Heart right ventricle (tissue), 16 donors: ENCODE measurements at regions of chr19 and their contacts with region 1.

Region 1: DNA sequence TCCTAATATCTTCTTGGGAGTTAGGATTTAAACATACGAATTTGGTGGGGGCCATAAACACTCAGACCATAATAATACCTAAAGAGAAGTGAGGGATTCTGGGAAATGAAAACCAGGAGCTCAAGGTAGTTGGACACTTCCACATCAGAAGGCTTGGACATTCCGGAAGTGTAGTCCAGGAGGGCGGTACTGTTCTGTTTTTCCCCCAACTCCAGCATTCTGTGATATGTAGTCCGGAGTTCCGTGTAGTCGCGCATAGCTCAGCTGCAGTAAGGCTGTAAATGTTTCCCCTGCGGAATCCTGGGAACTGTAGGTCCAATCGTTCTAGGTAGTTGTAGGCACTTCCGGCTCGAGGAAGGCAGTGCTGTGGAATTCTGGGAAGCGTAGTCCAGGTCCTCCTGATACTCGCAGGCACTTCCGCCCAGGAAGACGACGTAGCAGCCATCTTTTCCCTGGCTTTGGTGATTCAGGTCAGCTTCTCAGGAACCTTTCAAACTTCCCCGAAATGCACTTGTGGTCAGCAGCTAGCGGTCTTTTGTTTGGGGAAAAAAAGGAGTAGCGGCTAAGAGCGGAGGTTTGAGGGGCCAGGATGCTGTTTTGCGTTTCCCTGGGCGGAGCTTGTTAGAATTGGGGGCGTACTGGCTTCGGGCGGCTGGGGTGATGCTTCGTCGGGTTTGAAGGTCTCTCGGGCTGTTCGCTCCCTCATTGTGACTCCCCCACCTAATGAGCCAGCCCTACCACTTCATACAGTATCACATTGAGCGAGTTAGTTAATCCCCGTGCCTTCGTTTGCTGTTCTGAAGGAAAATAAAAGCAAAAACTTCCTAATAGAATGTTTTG is at the start of gene ZNF226:
- DNase-seq: peak; percentile 76 to 95
- ATAC-seq: peak; percentile 99 to 100 (median 100)
- H3K4me3 ChIP-seq: peak within 1 kb of the TSS; percentile 55 to 86 (median 71)
- H3K27ac ChIP-seq: peak within 1 kb of the TSS; percentile 31 to 92 (median 86)
- H3K4me1 ChIP-seq: peaks cover 0 to 17% (median 12%) of the 10 kb centered on the region in 9 donors
- H3K27me3 ChIP-seq: no peaks in the 10 kb centered on the region
- CTCF ChIP-seq: no peak
- total RNA-seq, gene ZNF226: 17.0 to 30.6 (median 22.6) TPM

Region 2: DNA sequence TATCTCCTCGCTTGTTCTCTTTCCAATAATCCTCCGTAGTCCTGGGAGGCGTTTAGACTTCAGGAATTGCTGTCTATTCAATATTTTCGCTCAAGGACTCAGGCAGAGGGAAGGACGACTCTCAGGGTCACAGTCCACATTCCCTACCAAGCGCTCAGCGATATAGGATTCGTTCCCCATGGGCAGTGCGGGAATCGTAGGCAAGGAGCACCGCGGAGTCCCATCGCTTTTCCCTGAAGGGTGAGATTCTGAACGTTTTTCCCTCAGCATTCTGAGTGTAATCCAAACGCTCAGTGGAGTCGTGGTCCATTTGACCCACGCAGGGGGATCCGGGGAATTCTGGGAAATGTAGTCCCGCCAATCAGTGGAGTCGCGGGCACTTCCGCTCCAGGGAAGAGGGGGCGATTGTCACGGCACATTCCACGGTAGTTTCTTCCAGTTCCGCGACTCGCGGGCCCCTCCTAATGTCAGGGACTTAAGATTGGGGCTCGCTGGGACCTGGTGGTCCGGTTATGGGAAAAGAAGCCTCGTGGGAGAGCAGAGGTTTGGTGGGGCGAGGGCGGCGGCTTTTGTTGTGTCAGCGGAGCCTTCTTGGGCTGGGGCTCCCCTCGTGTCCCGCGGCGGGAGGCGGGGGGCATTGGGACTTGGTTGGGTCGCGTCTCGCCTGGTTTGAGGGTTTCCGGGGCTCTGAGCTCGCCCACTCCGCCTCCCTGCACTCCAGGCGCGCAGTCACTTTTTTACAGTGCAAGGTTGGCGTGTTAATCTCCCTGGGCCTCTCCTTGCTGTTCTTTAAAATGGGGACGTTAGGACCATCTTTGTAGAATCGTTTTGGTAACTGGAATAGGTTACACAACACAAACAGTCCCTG is 23.5 kb before region 1 on chr19 and contains the start of gene ZNF234:
- intact Hi-C with region 1: loop called in 2 of 10 experiments (anchors 1 to 2 kb)
- DNase-seq: peak; percentile 70 to 93
- ATAC-seq: peak; percentile 95 to 99 (median 98)
- H3K4me3 ChIP-seq: peak within 1 kb of the TSS; percentile 81 to 97 (median 93)
- H3K27ac ChIP-seq: peak within 1 kb of the TSS; percentile 24 to 92 (median 87)
- H3K4me1 ChIP-seq: peaks cover 0 to 37% (median 17%) of the 10 kb centered on the region in 9 donors
- H3K27me3 ChIP-seq: no peaks in the 10 kb centered on the region
- CTCF ChIP-seq: peak in 5 of 9 donors; percentile 6 to 27 (median 8)
- total RNA-seq, gene ZNF234: 8.0 to 13.4 (median 9.0) TPM

Region 3: DNA sequence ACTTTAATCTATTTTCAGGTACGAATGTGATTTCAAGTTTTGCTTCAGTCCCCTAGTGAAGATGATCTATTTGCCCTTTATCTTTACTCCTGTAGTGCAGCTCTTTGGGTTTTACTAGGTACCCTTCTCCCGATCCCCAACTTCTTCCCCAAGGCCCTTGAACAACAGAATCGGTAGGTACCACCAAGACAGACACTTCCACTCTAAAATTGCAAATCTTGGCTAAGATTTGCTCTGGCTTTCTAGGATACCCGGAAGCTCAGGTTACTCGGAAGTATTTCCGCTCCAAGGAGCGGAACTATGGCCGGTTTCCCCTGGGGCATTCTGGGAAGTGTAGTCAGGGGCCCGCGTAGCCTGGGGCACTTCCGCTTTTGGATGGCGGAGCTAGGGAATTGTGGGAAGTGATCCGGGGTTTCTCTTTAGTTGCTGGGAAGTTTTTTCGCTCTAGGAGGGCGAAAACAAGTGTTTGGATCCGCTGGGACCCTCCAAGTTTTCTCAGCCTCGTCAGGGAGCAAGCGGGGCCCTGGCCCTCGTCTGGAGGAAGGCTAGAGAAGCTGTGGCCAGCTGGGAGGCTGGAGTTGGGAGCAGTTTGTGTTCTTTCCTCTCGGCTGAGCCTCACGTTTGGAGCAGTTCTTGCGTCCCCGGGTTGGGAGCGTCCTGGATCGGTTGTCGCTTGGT is 42.4 kb after region 1 on chr19:
- intact Hi-C with region 1: loop called in 5 of 10 experiments (anchors 1 to 10 kb)
- DNase-seq: peak; percentile 86 to 94
- ATAC-seq: peak; percentile 94 to 98 (median 97)
- H3K4me3 ChIP-seq: peak overlapping the region; percentile 58 to 95 (median 76)
- H3K27ac ChIP-seq: peak overlapping the region; percentile 88 to 96 (median 93)
- H3K4me1 ChIP-seq: peaks cover 0 to 16% (median 8%) of the 10 kb centered on the region in 9 donors
- H3K27me3 ChIP-seq: peaks cover 0 to 5% (median 0%) of the 10 kb centered on the region in 7 donors
- CTCF ChIP-seq: no peak

Region 4: GRCh38 chr19:44212250-44212865 is 47.5 kb after region 1 on chr19 and contains the start of gene ZNF227:
- intact Hi-C with region 1: loop called in 5 of 10 experiments (anchors 1 to 10 kb)
- DNase-seq: peak; percentile 89 to 93
- ATAC-seq: peak; percentile 97 to 98 (median 98)
- H3K4me3 ChIP-seq: peak within 1 kb of the TSS; percentile 55 to 91 (median 81)
- H3K27ac ChIP-seq: peak within 1 kb of the TSS; percentile 63 to 92 (median 86)
- H3K4me1 ChIP-seq: peaks cover 0 to 33% (median 20%) of the 10 kb centered on the region in 9 donors
- H3K27me3 ChIP-seq: no peaks in the 10 kb centered on the region
- CTCF ChIP-seq: no peak
- total RNA-seq, gene ZNF227: 10.6 to 18.1 (median 12.6) TPM

Region 5: DNA sequence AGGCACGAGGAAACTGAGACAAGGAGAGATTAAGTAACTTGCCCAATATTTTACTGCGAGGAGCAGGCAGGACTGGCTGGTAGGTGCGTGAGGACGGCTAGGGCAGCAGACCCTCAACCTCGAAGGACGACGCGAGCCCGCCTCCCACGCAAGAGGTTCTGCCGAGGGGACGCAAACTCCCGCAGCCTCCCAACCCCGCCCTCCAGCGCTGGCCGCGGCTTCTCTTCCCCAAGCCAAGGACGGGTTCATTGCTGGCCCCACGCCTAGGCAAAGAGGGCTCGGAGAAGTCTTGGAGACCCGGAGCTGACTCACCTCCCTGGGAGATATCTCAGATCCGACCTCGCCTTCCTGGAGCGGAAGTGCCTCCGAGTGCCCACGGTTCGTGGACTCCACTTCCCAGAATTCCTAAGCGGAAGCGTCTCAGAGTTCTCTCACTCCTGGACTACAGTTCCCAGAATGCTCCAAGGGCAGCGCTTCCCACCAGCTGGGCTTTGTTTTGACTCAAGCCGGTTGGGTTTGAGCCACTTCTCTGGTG is 139.8 kb after region 1 on chr19 and contains the start of gene ZNF235:
- intact Hi-C with region 1: loop called in 1 of 10 experiments (anchors 1 kb)
- DNase-seq: peak; percentile 85 to 92
- ATAC-seq: peak; percentile 99 to 100 (median 100)
- H3K4me3 ChIP-seq: peak within 1 kb of the TSS; percentile 37 to 95 (median 80)
- H3K27ac ChIP-seq: peak within 1 kb of the TSS; percentile 4 to 86 (median 80)
- H3K4me1 ChIP-seq: peaks cover 3 to 16% (median 12%) of the 10 kb centered on the region in 9 donors
- H3K27me3 ChIP-seq: no peaks in the 10 kb centered on the region
- CTCF ChIP-seq: no peak
- total RNA-seq, gene ZNF235: 2.4 to 5.1 (median 3.6) TPM